Right ventricle myocardium superior (tissue), 1 donor: ENCODE measurements at regions of chr11 and their contacts with region 1.

Region 1: GRCh38 chr11:122853971-122854446 is 15.7 kb downstream of the CRTAM start:
- DNase-seq: no peak
- ATAC-seq: peak; percentile 48

Region 2: DNA sequence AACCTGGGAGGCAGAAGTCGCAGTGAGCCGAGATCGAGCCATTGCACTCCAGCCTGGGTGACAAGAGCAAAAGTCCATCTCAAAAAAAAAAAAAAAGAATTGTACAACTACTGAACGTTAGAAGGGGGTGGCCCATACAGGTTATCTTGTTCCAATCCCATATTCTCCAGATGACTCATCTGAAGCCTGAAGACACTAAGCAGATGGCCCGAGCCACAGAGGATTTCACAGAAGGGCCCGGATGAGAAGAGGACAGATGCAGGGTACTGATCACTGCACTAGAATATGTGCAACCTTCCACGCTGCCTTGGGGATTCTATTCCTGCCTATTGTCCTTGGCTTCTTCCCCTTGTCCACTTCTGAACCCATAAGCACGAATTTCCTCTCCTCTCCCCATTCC is 269.3 kb before region 1 on chr11:
- intact Hi-C with region 1: loop called (anchors 10 kb)
- DNase-seq: no peak
- ATAC-seq: no peak

Region 3: DNA sequence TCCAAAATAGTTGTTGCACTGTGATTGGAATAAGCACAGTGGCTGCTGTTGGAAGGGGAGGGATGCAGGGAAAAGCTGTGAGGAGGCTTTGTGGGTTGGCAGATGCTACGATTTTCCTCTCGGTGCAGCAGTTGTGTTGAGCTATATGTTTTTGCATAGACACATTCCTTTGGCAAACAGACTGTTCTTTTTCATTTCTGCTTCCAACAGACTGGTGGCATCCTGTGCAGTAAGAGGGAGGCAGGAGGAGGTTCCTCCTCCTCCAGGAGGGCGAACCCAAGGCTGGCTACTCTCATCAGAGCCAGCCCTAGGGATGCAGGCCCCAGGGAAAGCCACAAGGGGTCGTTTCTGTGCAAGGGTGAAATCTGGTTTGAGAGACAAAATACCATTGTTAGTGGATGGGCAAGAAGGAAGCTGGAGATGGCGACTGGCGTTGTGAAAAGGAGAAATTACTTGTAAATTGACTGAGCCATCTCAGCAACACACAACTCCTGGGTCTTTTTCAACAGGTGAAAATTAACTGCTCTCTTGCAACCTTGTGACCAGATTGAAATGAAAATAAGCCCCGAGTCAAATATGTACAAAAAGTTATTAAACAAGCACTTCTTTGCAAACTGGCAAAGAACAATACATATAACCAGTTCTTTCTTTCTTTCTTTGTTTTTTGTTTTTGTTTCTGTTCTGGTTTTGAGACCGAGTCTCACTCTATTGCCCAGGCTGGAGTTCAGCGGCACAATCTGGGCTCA is 225.0 kb before region 1 on chr11:
- intact Hi-C with region 1: loop called (anchors 5 kb)
- DNase-seq: peak; percentile 78
- ATAC-seq: peak; percentile 85

Region 4: DNA sequence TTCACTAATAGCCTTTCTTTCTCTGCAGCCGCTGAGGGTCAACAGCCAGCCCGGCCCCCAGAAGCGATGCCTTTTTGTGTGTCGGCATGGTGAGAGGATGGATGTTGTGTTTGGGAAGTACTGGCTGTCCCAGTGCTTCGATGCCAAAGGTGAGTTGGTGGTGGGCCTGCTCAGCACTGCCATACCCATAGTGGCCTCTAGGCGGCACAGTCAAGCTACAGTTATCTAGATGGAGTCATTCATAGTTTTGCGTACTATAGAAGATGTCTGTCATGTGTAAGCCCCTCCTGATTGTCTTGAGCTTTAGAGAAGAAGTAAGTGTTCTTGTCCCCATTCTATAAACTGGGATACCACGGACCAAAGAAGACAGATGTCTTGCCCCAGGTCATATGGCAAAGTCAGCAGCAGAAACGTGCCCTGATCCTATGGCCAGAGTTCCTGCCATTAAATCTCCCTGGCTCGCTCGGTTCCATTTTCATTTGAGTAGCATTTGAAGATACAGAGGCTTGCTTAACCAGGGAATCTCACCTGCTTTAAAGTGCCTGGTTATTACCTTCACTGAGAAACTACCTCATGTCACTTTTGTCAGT is 57.8 kb before region 1 on chr11:
- intact Hi-C with region 1: loop called (anchors 5 kb)
- DNase-seq: peak; percentile 61
- ATAC-seq: no peak